ENCODE measurements at regions of chr2 and their contacts with region 1.

Region 1: GRCh38 chr2:174492963-174493431 is 6.2 kb upstream of the GPR155 start:
- DNase-seq: peak; percentile 28 to 91 (median 77)
- ATAC-seq: peak; percentile 87 to 91
- H3K4me3 Mint-ChIP-seq: peak overlapping the region; percentile 81 to 94 (median 89)
- H3K27ac Mint-ChIP-seq: peak overlapping the region; percentile 94 to 100 (median 98)
- H3K4me1 Mint-ChIP-seq: peaks cover 28 to 81% (median 79%) of the 10 kb centered on the region in 4 donors
- H3K27me3 Mint-ChIP-seq: no peaks in the 10 kb centered on the region

Region 2: GRCh38 chr2:174450021-174450816 is 42.8 kb before region 1 on chr2:
- POLR2A ChIA-PET with region 1: no interaction called
- DNase-seq: peak in 2 of 10 donors; percentile 7 to 15
- ATAC-seq: peak; percentile 83 to 89
- H3K4me3 Mint-ChIP-seq: peak overlapping the region in 4 of 10 donors; percentile 1 to 43 (median 16)
- H3K27ac Mint-ChIP-seq: peak overlapping the region; percentile 6 to 87 (median 62)
- H3K4me1 Mint-ChIP-seq: peaks cover 9 to 18% (median 13%) of the 10 kb centered on the region in 4 donors
- H3K27me3 Mint-ChIP-seq: no peaks in the 10 kb centered on the region

Region 3: DNA sequence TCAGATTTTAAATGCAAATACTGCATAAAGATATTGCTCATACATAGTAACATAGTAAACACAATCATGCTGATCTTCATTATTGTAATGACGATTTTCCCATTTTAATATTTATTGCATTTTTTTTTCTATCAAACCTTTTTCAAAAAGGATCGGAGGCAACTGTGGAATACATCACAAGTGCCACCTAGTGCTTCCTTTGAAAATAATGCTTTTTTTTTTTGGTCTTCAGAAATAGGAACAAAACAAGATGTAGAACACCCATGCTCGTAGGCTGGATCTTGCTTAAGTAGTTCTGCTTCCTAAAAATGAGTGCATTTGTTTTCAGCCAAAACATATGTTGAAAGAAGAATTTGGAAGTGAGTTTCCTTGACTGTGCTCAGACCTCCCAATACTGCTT is 29.6 kb after region 1 on chr2:
- POLR2A ChIA-PET with region 1: interaction called, 19 read pairs
- DNase-seq: peak in 3 of 10 donors; percentile 14 to 19 (median 16)
- ATAC-seq: no peak
- H3K4me3 Mint-ChIP-seq: no peak overlapping the region
- H3K27ac Mint-ChIP-seq: peak overlapping the region in 1 of 10 donors; percentile 14
- H3K4me1 Mint-ChIP-seq: peaks cover 14 to 21% (median 17%) of the 10 kb centered on the region in 4 donors
- H3K27me3 Mint-ChIP-seq: peaks cover 0 to 2% (median 0%) of the 10 kb centered on the region in 5 donors